ENCODE measurements at regions of chr10 and their contacts with region 1.

Region 1: GRCh38 chr10:56912043-56912442 is 551.0 kb upstream of the ZWINT start:
- DNase-seq: no peak
- ATAC-seq: no peak
- H3K4me3 ChIP-seq: no peak overlapping the region
- H3K27ac ChIP-seq: no peak overlapping the region
- H3K4me1 ChIP-seq: no peaks in the 10 kb centered on the region
- H3K27me3 ChIP-seq: no peaks in the 10 kb centered on the region
- CTCF ChIP-seq: no peak
- EP300 ChIP-seq: no peak
- POLR2A ChIP-seq: no peak
- RAD21 ChIP-seq: no peak

Region 2: GRCh38 chr10:56867236-56867635 is 44.8 kb before region 1 on chr10:
- CTCF ChIA-PET with region 1: no interaction called
- POLR2A ChIA-PET with region 1: no interaction called
- in situ Hi-C with region 1: no loop called
- intact Hi-C with region 1: loop called (anchors 1 kb)
- DNase-seq: no peak
- ATAC-seq: no peak
- H3K4me3 ChIP-seq: no peak overlapping the region
- H3K27ac ChIP-seq: no peak overlapping the region
- H3K4me1 ChIP-seq: no peaks in the 10 kb centered on the region
- H3K27me3 ChIP-seq: no peaks in the 10 kb centered on the region
- CTCF ChIP-seq: no peak
- EP300 ChIP-seq: no peak
- POLR2A ChIP-seq: no peak
- RAD21 ChIP-seq: no peak

Measured in HepG2 (cell line).